CD4-positive, alpha-beta memory T cell (primary cell): ENCODE measurements at regions of chr20 and their contacts with region 1.

Region 1: GRCh38 chr20:40990542-40991120 is 38.0 kb upstream of the TOP1 start:
- DNase-seq: peak; percentile 54 to 62 (median 56)
- H3K4me3 ChIP-seq: no peak overlapping the region
- H3K4me3 Mint-ChIP-seq: peak overlapping the region in 3 of 8 donors; percentile 21 to 56 (median 34)
- H3K27ac ChIP-seq: no peak overlapping the region
- H3K27ac Mint-ChIP-seq: peak overlapping the region in 6 of 7 donors; percentile 7 to 77 (median 50)
- H3K4me1 ChIP-seq: peaks cover 31% of the 10 kb centered on the region
- H3K4me1 Mint-ChIP-seq: peaks cover 23 to 36% (median 29%) of the 10 kb centered on the region in 4 donors
- H3K27me3 ChIP-seq: no peaks in the 10 kb centered on the region
- H3K27me3 Mint-ChIP-seq: no peaks in the 10 kb centered on the region

Region 2: GRCh38 chr20:40980106-40980827 is 10.4 kb before region 1 on chr20:
- CTCF ChIA-PET with region 1: interaction called, 17 read pairs
- POLR2A ChIA-PET with region 1: no interaction called
- intact Hi-C with region 1: no loop called
- DNase-seq: no peak
- H3K4me3 ChIP-seq: no peak overlapping the region
- H3K4me3 Mint-ChIP-seq: no peak overlapping the region
- H3K27ac ChIP-seq: no peak overlapping the region
- H3K27ac Mint-ChIP-seq: no peak overlapping the region
- H3K4me1 ChIP-seq: no peaks in the 10 kb centered on the region
- H3K4me1 Mint-ChIP-seq: no peaks in the 10 kb centered on the region
- H3K27me3 ChIP-seq: no peaks in the 10 kb centered on the region
- H3K27me3 Mint-ChIP-seq: peaks cover 9 to 14% of the 10 kb centered on the region in 2 donors

Region 3: GRCh38 chr20:41028348-41029148 is 37.9 kb after region 1 on chr20 and contains the start of gene TOP1:
- CTCF ChIA-PET with region 1: interaction called, 15 read pairs
- POLR2A ChIA-PET with region 1: interaction called, 6 read pairs
- intact Hi-C with region 1: loop called (anchors 5 kb)
- DNase-seq: peak; percentile 97 to 100 (median 99)
- H3K4me3 ChIP-seq: peak within 1 kb of the TSS; percentile 25 to 83
- H3K4me3 Mint-ChIP-seq: peak within 1 kb of the TSS; percentile 89 to 98 (median 95)
- H3K27ac ChIP-seq: peak within 1 kb of the TSS; percentile 97
- H3K27ac Mint-ChIP-seq: peak within 1 kb of the TSS; percentile 96 to 99 (median 97)
- H3K4me1 ChIP-seq: peaks cover 48% of the 10 kb centered on the region
- H3K4me1 Mint-ChIP-seq: peaks cover 38 to 57% (median 44%) of the 10 kb centered on the region in 4 donors
- H3K27me3 ChIP-seq: no peaks in the 10 kb centered on the region
- H3K27me3 Mint-ChIP-seq: peaks cover 0 to 2% of the 10 kb centered on the region in 2 donors
- total RNA-seq, gene TOP1: 44.4 to 47.5 TPM

Region 4: DNA sequence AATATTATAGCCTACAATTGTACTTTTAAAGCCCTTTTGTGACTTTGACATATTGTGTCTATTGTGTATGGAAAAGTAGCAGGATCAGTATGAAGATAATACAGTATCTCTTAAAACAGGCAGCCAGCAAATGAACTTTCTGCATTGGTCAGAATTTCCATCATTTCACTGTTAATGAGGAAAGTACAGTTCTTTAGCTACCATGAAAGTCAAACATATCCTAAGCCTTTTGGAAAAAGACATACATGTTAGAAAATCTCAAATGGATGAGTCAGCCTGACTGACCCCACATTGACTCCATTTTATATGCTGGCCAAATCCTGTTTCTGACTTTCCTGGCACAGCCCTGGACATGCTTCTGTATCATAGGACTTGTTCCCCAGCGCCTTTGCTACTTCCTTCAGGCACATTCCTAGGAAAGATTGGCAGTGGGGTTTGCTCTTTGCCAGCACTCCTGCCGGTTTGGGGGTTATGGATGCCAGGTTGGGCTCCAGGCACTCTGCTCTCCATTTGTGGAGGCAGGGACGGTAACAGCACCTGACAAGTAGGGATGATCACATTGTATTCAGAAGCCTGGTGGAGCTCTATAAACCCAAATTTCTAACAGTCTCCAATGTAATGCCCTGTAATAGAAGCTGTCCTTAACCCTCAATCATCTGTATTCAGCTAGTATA is 81.7 kb after region 1 on chr20:
- CTCF ChIA-PET with region 1: interaction called, 31 read pairs
- POLR2A ChIA-PET with region 1: interaction called, 3 read pairs
- intact Hi-C with region 1: no loop called
- DNase-seq: no peak
- H3K4me3 ChIP-seq: no peak overlapping the region
- H3K4me3 Mint-ChIP-seq: peak overlapping the region in 6 of 8 donors; percentile 7 to 60 (median 50)
- H3K27ac ChIP-seq: no peak overlapping the region
- H3K27ac Mint-ChIP-seq: peak overlapping the region in 5 of 7 donors; percentile 8 to 87 (median 25)
- H3K4me1 ChIP-seq: peaks cover 68% of the 10 kb centered on the region
- H3K4me1 Mint-ChIP-seq: peaks cover 60 to 85% (median 73%) of the 10 kb centered on the region in 4 donors
- H3K27me3 ChIP-seq: no peaks in the 10 kb centered on the region
- H3K27me3 Mint-ChIP-seq: no peaks in the 10 kb centered on the region

Region 5: GRCh38 chr20:41095110-41095969 is 104.7 kb after region 1 on chr20:
- CTCF ChIA-PET with region 1: interaction called, 374 read pairs
- POLR2A ChIA-PET with region 1: interaction called, 12 read pairs
- intact Hi-C with region 1: loop called (anchors 1 kb)
- DNase-seq: peak in 4 of 5 donors; percentile 51 to 61 (median 54)
- H3K4me3 ChIP-seq: no peak overlapping the region
- H3K4me3 Mint-ChIP-seq: no peak overlapping the region
- H3K27ac ChIP-seq: no peak overlapping the region
- H3K27ac Mint-ChIP-seq: peak overlapping the region in 2 of 7 donors; percentile 46 to 72
- H3K4me1 ChIP-seq: no peaks in the 10 kb centered on the region
- H3K4me1 Mint-ChIP-seq: peaks cover 0 to 6% (median 0%) of the 10 kb centered on the region in 4 donors
- H3K27me3 ChIP-seq: no peaks in the 10 kb centered on the region
- H3K27me3 Mint-ChIP-seq: no peaks in the 10 kb centered on the region

Region 6: DNA sequence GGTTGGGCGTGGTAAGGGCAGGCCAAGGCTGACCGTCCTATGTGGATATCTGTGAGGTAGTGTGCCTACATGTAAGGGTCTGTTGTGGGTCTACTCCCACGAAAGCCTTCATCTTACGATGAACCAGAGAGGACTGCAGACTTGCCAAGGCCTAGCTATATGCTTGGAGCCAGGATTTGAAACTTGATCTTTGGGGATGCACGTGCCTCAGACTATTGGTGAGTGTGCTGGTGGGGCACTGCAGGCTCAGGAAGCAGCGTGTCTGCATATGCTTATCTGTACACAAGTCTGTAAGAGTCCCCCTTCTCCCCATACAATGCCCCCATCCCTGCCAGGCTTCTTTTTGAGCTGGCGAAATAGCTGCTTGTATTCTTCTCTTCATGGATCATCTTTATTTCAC is 164.6 kb after region 1 on chr20:
- CTCF ChIA-PET with region 1: interaction called, 12 read pairs
- POLR2A ChIA-PET with region 1: no interaction called
- intact Hi-C with region 1: no loop called
- DNase-seq: peak in 1 of 5 donors; percentile 30
- H3K4me3 ChIP-seq: no peak overlapping the region
- H3K4me3 Mint-ChIP-seq: peak overlapping the region in 7 of 8 donors; percentile 37 to 93 (median 75)
- H3K27ac ChIP-seq: peak overlapping the region; percentile 73
- H3K27ac Mint-ChIP-seq: peak overlapping the region; percentile 78 to 99 (median 98)
- H3K4me1 ChIP-seq: peaks cover 100% of the 10 kb centered on the region
- H3K4me1 Mint-ChIP-seq: peaks cover 89 to 100% (median 94%) of the 10 kb centered on the region in 4 donors
- H3K27me3 ChIP-seq: no peaks in the 10 kb centered on the region
- H3K27me3 Mint-ChIP-seq: peaks cover 0 to 3% of the 10 kb centered on the region in 2 donors